HAP-1 (cell line): ENCODE measurements at regions of chr20 and their contacts with region 1.

Region 1: DNA sequence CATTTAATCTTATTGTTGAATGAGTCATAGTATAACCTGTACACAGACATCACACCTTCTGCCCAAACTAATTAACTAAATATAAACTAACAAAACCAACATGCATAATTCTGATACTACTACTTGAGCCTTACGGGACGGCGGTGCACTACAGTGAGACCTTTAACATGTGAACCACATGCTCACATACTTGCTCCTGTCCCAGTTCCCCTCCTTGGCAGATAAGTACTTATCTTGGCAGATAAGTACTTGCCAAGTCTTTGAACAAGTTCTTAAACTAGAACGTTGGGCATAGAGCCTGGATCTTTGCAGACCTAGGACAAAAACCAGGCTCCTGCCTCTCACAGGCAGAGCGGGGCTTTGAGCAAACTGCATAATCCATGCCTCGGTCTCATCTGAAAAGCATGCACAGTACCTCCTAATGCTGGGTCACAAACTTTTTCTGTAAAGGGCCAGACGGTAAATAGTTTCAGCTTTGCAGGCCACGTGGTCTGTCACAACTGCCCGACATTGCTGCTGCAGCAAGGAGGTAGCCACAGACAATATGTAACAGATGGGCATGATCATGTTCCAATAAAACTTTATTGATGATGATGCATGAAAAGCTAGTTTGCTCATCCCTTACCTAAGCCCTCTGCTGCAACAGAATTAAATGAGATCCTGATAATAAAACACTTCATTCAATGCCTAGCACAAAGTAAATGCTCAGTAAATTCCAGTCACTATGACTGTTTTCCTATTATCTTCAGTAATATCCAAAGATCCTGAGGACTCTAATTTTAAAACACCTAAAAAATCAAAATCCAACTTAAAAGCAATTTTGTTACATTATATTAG is 22.9 kb downstream of the ZNF217 start:
- DNase-seq: no peak
- H3K4me3 ChIP-seq: no peak overlapping the region
- H3K4me1 ChIP-seq: peaks cover 15% of the 10 kb centered on the region
- H3K27me3 ChIP-seq: no peaks in the 10 kb centered on the region

Region 2: GRCh38 chr20:54062812-54063280 is 492.1 kb after region 1 on chr20:
- in situ Hi-C with region 1: loop called (anchors 25 kb)
- DNase-seq: peak; percentile 17 to 66
- H3K4me3 ChIP-seq: no peak overlapping the region
- H3K4me1 ChIP-seq: no peaks in the 10 kb centered on the region
- H3K27me3 ChIP-seq: no peaks in the 10 kb centered on the region

Region 3: DNA sequence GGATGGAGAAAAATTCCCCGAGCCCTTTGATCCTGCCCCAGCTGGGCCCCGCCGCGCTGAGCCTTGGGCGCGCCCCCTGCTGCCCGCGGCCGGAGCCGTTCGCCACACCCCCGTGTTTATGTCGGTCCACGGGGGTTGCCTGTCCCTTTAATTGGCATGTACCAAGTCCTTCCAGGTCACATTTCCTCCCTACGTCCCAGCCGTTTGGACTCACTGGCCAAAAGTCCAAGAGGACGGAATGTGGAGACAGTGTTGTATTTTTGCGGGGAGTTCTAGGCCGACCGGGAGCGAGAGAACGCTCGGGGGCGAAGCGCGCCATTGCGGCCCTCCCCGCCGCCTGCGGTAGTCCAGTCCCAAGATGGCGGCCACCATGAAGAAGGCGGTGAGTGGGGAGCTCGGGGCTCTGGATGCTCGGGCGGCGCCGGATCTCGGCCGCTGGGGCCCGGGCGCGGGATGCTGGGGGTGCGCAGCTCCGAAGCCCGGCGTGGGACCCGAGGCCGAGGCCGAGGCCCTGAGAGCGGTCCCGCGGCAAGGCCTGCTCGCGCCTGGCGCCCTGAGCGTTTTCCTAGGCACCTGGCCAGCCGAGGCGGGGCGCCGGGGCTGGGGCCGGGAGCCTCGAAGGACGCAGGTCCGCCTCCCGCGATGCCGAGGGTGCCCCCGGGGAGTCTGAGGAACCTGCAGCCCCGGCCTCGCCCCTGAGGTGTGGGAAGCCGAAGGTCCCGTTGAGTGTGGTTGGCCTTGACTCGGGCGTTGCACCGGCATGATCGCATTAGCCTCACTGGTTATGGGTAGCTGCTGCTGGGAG is 637.2 kb after region 1 on chr20 and contains the start of gene PFDN4:
- in situ Hi-C with region 1: loop called (anchors 25 kb)
- DNase-seq: peak; percentile 79 to 89
- H3K4me3 ChIP-seq: peak within 1 kb of the TSS; percentile 74
- H3K4me1 ChIP-seq: peaks cover 7% of the 10 kb centered on the region
- H3K27me3 ChIP-seq: no peaks in the 10 kb centered on the region